Panc1 (cell line): ENCODE measurements at regions of chr10 and their contacts with region 1.

Region 1: GRCh38 chr10:24589265-24589664 is 134.4 kb downstream of the ARHGAP21 start:
- DNase-seq: no peak
- ATAC-seq: no peak
- H3K4me3 ChIP-seq: no peak overlapping the region
- H3K27ac ChIP-seq: no peak overlapping the region
- H3K4me1 ChIP-seq: no peaks in the 10 kb centered on the region
- H3K27me3 ChIP-seq: no peaks in the 10 kb centered on the region
- CTCF ChIP-seq: no peak

Region 2: GRCh38 chr10:24556750-24557742 is 32.2 kb before region 1 on chr10:
- CTCF ChIA-PET with region 1: no interaction called
- POLR2A ChIA-PET with region 1: no interaction called
- in situ Hi-C with region 1: no loop called
- intact Hi-C with region 1: no loop called
- DNase-seq: peak; percentile 42
- ATAC-seq: peak; percentile 89
- H3K4me3 ChIP-seq: no peak overlapping the region
- H3K27ac ChIP-seq: no peak overlapping the region
- H3K4me1 ChIP-seq: no peaks in the 10 kb centered on the region
- H3K27me3 ChIP-seq: no peaks in the 10 kb centered on the region
- CTCF ChIP-seq: peak; percentile 75

Region 3: DNA sequence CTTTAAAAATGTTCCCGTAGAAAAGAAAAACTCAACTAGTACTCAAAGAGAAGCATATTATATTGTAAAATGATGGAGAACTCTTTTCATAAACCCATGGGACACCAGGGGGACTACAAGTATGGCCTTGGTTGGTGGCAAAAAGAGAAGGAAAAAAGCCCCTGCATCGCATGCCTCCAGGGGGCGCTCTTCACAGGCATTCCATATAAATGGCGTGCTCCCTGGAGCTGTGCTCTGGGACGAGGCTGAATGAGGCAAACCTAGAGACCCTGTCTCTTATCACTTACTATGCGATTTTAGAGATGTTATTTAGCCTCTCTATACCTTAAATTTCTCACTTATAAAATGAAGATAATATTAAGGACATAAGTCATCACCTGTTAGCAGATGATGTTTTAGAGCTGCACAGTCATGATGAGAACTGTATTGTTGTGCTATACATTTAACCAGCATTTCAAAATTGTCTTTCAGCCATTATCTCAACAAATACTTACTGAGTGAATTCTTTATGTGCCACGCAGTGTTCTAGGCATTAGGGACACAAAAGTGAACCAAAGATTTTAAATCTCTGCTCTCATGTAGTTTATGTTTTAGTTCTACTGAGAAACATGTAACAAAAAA is 28.6 kb after region 1 on chr10:
- CTCF ChIA-PET with region 1: no interaction called
- POLR2A ChIA-PET with region 1: interaction called, 17 read pairs
- in situ Hi-C with region 1: no loop called
- intact Hi-C with region 1: no loop called
- DNase-seq: peak; percentile 24
- ATAC-seq: peak; percentile 85
- H3K4me3 ChIP-seq: no peak overlapping the region
- H3K27ac ChIP-seq: no peak overlapping the region
- H3K4me1 ChIP-seq: no peaks in the 10 kb centered on the region
- H3K27me3 ChIP-seq: no peaks in the 10 kb centered on the region
- CTCF ChIP-seq: peak; percentile 88

Region 4: DNA sequence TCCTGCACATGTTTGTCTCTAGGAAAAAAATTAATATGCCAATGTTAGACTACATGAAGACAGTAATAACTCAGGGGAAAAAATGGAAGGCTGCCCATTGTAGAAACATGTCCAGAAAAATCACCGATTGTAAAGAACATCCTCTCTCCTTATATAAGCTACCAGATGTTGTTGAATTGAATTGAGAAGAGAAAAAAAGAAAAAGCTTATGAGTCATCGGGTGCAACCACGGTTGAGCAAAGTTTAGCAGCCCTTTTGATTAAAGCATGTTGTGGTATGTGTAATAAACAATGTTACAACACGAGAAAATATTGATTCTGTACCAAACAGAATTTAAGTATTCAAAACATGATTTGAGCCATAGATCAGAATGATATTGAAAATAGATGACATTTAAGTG is 236.8 kb after region 1 on chr10:
- CTCF ChIA-PET with region 1: no interaction called
- POLR2A ChIA-PET with region 1: no interaction called
- in situ Hi-C with region 1: no loop called
- intact Hi-C with region 1: no loop called
- DNase-seq: no peak
- ATAC-seq: no peak
- H3K4me3 ChIP-seq: no peak overlapping the region
- H3K27ac ChIP-seq: no peak overlapping the region
- H3K4me1 ChIP-seq: no peaks in the 10 kb centered on the region
- H3K27me3 ChIP-seq: no peaks in the 10 kb centered on the region
- CTCF ChIP-seq: no peak

Region 5: DNA sequence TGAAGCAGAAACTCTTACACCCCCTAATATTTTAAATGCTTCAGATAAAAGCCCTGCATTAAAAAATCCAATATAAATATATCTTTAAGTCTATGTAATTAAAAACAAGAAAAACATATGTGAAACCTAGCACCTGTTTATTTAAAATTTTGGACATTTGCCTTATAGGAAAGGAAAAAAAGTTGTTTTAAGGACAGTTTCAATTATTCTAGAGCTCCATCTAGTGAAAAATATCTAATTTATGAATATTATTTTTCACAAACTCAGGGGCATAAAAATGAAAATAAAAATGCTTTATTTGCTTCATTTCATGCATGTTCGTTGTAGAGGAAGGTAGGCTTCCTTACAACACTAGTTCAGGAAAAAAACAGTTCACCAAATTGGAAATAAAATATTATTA is 400.6 kb after region 1 on chr10:
- CTCF ChIA-PET with region 1: interaction called, 11 read pairs
- POLR2A ChIA-PET with region 1: no interaction called
- in situ Hi-C with region 1: no loop called
- intact Hi-C with region 1: no loop called
- DNase-seq: no peak
- ATAC-seq: no peak
- H3K4me3 ChIP-seq: no peak overlapping the region
- H3K27ac ChIP-seq: no peak overlapping the region
- H3K4me1 ChIP-seq: peaks cover 4% of the 10 kb centered on the region; the same call in 1 of the 2 replicates
- H3K27me3 ChIP-seq: no peaks in the 10 kb centered on the region
- CTCF ChIP-seq: peak; percentile 16; the same call in 1 of the 2 replicates